Esophagus muscularis mucosa (tissue), 4 donors: ENCODE measurements at regions of chr4 and their contacts with region 1.

Region 1: DNA sequence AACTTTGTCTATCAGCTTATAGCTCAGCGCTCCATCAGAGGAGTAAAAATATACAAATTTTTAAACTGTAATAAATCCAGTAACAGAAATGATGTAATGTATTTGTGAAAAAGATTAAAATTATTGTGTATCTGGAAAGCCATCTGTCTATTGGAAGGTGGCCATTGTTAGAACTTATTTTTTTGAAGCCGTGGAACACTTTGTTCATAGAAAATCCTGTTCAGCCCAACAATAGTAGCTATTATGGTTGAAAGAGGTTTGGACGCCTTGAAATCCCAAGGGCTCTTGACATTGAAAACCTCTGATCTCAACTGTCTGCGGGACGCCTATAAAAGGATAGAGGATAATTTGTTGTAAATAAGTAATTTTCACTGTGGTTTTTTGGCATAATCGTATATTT is 98.3 kb downstream of the RAPGEF2 start:
- DNase-seq: no peak
- H3K4me3 ChIP-seq: no peak overlapping the region
- H3K27ac ChIP-seq: peak overlapping the region in 3 of 4 donors; percentile 11 to 36 (median 29)
- H3K4me1 ChIP-seq: peaks cover 23 to 52% (median 39%) of the 10 kb centered on the region in 4 donors
- H3K27me3 ChIP-seq: no peaks in the 10 kb centered on the region
- CTCF ChIP-seq: no peak
- EP300 ChIP-seq: no peak
- POLR2A ChIP-seq: no peak

Region 2: DNA sequence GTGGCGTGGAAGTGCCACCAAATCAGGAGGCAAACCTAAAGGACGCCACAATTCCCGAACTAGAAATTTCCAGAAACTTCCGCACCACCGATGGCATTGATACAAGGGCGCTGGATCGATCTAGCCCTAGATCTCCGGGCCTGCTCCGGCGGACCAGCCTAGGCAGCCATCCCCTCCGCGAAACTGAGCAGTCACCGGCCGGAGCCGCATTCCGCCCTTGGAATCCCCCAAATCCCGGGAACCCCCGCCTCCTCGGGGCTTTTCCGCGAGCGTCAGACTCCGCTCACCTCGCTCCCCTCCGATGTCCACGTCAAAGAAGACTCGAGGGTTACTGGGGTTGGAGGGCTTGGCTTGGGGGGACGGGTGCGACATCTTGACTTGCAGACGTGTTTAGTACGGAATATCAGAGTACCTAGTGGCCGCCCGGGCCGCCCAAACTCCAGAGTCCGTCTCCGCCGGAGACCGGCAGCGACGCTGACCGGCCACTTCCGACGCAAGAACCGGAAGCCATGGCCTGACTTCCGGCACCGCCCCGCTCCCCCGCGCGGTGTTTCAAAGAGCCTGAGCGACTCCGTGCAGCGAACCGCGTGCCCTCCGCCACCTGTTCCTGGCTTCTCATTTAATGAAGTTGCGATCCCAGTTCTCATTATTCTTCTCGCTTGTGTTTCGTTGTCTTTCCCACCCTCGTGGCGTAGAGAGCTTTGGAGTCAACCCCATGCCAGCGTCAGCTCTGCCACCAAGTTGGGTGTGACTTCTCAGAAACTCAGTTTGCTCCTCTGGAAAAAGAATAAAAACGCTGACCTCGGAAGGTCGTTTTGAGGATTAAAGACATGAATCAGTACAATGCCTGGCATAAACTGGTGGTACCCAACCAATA is 478.0 kb before region 1 on chr4 and contains the start of gene PPID:
- intact Hi-C with region 1: loop called (anchors 5 kb)
- DNase-seq: peak; percentile 95
- H3K4me3 ChIP-seq: peak within 1 kb of the TSS; percentile 79 to 91 (median 88)
- H3K27ac ChIP-seq: peak within 1 kb of the TSS; percentile 88 to 95 (median 91)
- H3K4me1 ChIP-seq: peaks cover 14 to 24% (median 20%) of the 10 kb centered on the region in 4 donors
- H3K27me3 ChIP-seq: no peaks in the 10 kb centered on the region
- CTCF ChIP-seq: no peak
- EP300 ChIP-seq: no peak
- POLR2A ChIP-seq: peak; percentile 36
- total RNA-seq, gene PPID: 17.1 to 29.0 (median 25.8) TPM

Region 3: DNA sequence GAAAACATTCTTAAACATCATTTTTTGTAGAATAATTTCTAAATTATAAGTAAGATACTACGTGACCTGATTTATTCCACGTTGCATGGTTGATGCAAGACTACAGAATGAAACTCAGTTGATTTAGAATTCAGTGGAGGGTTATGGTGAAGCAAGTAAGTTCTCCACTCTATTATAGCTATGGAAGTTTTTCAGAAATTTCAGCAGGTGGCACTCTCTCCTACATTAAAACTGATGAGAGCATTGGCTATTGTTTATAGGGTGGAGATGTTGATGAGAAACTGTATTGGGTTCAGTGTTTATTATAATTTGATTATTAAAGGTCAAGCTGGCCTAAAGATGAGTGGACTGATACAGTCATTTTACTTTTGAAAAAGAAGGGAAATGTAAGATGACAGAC is 344.3 kb before region 1 on chr4:
- intact Hi-C with region 1: loop called (anchors 5 kb)
- DNase-seq: no peak
- H3K4me3 ChIP-seq: no peak overlapping the region
- H3K27ac ChIP-seq: no peak overlapping the region
- H3K4me1 ChIP-seq: peaks cover 0 to 12% (median 7%) of the 10 kb centered on the region in 4 donors
- H3K27me3 ChIP-seq: no peaks in the 10 kb centered on the region
- CTCF ChIP-seq: peak; percentile 44 to 53 (median 51)
- EP300 ChIP-seq: no peak
- POLR2A ChIP-seq: no peak